GM13977 (cell line): ENCODE measurements at regions of chr4 and their contacts with region 1.

Region 1: DNA sequence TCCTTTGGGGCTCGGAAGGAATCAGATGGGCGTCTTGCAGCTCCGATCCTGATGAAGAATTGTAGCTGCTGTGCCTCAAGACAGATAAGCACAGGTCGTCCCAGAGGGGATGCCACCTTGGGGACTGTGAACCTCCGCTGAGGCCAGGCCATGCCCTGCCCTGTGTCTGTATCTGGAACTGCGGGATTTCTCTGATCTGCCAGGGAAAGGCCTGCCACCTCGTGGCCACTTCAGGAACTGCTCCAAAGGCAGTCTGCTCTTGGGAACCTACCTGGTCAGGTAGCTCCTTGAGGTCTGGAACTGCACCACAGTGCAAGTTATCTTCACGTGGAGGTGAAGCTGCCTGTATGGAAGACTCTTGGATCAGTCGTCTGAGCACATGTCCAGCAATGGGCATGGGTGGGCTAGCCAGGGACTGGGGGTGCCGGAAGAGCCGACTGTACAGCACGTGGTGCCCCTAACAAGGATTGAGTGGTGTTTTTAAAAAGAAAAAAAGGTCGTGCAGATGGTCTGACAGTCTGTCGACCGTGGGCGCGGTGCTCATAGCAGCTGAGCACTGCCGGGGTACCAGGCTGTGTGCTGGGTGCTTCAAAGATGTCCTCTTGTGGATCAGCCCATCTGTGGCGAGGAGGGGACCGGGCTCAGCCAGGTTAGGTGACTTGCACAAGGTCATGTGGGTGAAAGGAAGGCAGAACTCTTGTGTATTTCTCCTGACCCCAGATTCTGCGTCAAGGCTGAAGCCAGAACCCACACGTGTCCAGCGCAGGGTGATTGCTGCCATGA is 3.1 kb upstream of the GRPEL1 start:
- DNase-seq: peak; percentile 80
- CTCF ChIP-seq: peak; percentile 94

Region 2: GRCh38 chr4:6709230-6710114 is 361.4 kb before region 1 on chr4 and contains the start of gene MRFAP1L1:
- in situ Hi-C with region 1: loop called (anchors 10 kb)
- DNase-seq: peak; percentile 92
- CTCF ChIP-seq: no peak

Region 3: DNA sequence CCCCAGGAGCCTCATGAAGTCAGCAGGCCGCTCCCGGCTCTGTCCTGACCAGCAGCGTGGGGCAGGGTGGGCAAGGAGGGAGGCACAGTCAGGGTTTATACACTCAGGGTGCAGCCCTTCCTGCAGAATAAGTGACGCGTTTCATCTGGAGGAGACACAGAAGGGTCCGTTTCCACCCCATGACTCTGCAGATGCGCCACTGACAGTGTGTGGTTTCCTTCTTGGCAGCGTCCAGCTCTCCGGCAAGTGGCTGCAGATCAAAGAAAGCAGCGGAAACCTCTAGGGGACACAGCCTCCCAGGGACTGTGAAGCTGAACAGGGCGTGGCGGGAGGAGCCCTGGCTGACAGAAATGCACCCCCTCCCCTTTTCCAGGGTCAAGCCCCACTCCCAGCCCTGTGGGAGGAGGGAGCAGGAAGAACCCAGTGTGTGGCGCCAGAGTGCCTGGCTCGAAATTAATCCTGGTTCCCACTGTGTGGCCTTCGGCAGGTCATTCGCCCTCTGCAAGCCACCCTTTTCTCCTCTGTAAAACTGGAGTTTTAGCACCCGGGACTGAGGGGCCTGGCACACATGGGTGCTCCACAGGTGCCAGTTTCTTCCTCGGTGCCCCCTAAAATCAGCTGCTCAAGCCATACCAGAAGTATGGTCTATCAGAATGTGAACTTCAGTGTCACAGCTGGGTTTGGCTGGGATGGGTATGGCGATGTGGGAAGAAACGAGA is 178.6 kb before region 1 on chr4:
- in situ Hi-C with region 1: loop called (anchors 10 kb)
- DNase-seq: peak; percentile 37
- CTCF ChIP-seq: peak; percentile 14